ENCODE measurements at regions of chr17 and their contacts with region 1.

Region 1: GRCh38 chr17:28763804-28764266 is 20.0 kb downstream of the TRAF4 start:
- DNase-seq: peak; percentile 83

Region 2: GRCh38 chr17:28878981-28879380 is 115.1 kb after region 1 on chr17:
- in situ Hi-C with region 1: loop called (anchors 5 kb)
- DNase-seq: peak; percentile 21

Region 3: GRCh38 chr17:29005936-29006511 is 242.2 kb after region 1 on chr17 and contains the start of gene SEZ6:
- in situ Hi-C with region 1: no loop called
- DNase-seq: peak; percentile 86
- total RNA-seq, gene SEZ6: not detected in 2 replicates

Measured in G401 (cell line).